Mammary epithelial cell (primary cell): ENCODE measurements at regions of chr4 and their contacts with region 1.

Region 1: DNA sequence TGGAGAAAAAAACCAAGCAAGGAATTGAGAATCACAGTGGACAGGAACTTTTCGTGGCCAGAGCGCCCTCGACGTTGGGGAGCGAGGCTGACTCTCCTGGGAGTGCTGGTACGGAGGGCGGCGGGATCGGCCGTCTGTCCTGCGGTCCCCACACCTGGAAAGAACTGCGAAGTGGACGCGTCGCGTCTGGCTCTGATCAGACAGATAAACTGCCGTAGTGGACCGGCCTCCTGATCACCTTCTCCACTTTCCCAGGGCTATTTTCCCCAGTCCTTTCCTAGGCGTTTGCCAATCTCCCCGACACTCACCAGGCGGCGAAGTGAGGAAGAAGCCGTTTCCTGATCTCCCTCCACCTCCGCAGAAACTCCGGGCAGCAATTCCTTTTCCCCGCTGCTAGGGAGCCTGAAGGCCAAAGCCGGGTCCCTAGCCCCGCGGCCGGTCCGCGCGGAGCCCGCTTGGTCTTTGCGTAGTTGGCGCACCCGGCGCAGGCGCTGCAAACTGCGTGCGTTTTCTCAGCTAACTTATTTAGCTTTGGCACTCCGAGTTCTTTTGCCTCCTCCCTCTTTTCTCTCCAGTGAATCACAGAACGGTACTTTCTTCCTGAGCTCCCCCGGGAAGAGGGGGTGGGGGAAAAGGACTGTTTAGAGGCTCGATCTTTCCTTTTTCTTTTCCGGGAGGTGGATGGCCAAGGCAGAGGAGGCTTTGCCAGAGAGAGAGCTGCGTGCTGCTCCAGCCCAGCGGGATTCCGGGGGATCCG is at the start of gene ARSJ:
- DNase-seq: peak; percentile 82
- H3K4me3 ChIP-seq: peak within 1 kb of the TSS; percentile 58 to 97 (median 90)
- H3K27ac ChIP-seq: peak within 1 kb of the TSS; percentile 94
- H3K4me1 ChIP-seq: peaks cover 14% of the 10 kb centered on the region
- H3K27me3 ChIP-seq: no peaks in the 10 kb centered on the region
- CTCF ChIP-seq: no peak
- total RNA-seq, gene ARSJ: 35.8 to 39.8 TPM

Region 2: DNA sequence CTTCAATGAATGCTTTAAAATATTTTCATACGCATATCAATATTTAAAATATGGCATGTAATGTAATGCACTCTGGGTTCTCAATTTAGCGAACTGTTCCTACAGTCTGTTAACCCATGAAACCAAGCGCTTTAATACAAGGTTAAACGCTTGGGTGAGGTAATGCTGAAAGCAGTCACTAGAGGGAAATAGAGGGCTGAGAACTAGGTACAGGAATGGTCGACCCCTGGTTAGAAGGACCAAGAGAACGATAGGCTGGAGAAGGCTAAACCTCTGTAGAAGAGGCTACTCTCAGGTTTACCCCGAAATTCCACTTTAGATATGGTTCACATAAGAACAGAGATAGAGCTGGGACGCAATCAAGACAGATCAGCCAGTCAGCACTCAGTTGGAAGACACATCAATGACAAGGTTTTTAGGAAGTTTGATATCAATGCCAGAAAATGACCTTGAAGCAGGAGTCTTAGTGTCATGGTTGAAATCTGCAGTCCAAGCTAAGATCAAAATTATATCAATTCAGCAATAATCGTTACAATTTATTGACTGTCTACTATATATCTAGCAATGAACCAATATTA is 26.8 kb before region 1 on chr4:
- CTCF ChIA-PET with region 1: no interaction called
- dilution Hi-C with region 1: no loop called
- in situ Hi-C with region 1: no loop called
- intact Hi-C with region 1: loop called (anchors 2 kb)
- DNase-seq: peak; percentile 27
- H3K4me3 ChIP-seq: no peak overlapping the region
- H3K27ac ChIP-seq: no peak overlapping the region
- H3K4me1 ChIP-seq: no peaks in the 10 kb centered on the region
- H3K27me3 ChIP-seq: no peaks in the 10 kb centered on the region
- CTCF ChIP-seq: peak; percentile 69 to 75

Region 3: GRCh38 chr4:114015444-114015899 is 36.1 kb after region 1 on chr4:
- CTCF ChIA-PET with region 1: no interaction called
- dilution Hi-C with region 1: no loop called
- in situ Hi-C with region 1: no loop called
- intact Hi-C with region 1: loop called (anchors 2 kb)
- DNase-seq: peak; percentile 99
- H3K4me3 ChIP-seq: no peak overlapping the region
- H3K27ac ChIP-seq: peak overlapping the region; percentile 78
- H3K4me1 ChIP-seq: peaks cover 42% of the 10 kb centered on the region
- H3K27me3 ChIP-seq: no peaks in the 10 kb centered on the region
- CTCF ChIP-seq: no peak

Region 4: GRCh38 chr4:114057746-114058145 is 78.4 kb after region 1 on chr4:
- CTCF ChIA-PET with region 1: no interaction called
- dilution Hi-C with region 1: no loop called
- in situ Hi-C with region 1: no loop called
- intact Hi-C with region 1: loop called (anchors 1 kb)
- DNase-seq: peak; percentile 62
- H3K4me3 ChIP-seq: peak overlapping the region in 1 of 3 experiments; percentile 5
- H3K27ac ChIP-seq: peak overlapping the region; percentile 59
- H3K4me1 ChIP-seq: peaks cover 11% of the 10 kb centered on the region
- H3K27me3 ChIP-seq: no peaks in the 10 kb centered on the region
- CTCF ChIP-seq: no peak

Region 5: GRCh38 chr4:114257501-114257900 is 278.2 kb after region 1 on chr4:
- CTCF ChIA-PET with region 1: no interaction called
- dilution Hi-C with region 1: no loop called
- in situ Hi-C with region 1: no loop called
- intact Hi-C with region 1: no loop called
- DNase-seq: no peak
- H3K4me3 ChIP-seq: no peak overlapping the region
- H3K27ac ChIP-seq: no peak overlapping the region
- H3K4me1 ChIP-seq: no peaks in the 10 kb centered on the region
- H3K27me3 ChIP-seq: no peaks in the 10 kb centered on the region
- CTCF ChIP-seq: no peak

Region 6: DNA sequence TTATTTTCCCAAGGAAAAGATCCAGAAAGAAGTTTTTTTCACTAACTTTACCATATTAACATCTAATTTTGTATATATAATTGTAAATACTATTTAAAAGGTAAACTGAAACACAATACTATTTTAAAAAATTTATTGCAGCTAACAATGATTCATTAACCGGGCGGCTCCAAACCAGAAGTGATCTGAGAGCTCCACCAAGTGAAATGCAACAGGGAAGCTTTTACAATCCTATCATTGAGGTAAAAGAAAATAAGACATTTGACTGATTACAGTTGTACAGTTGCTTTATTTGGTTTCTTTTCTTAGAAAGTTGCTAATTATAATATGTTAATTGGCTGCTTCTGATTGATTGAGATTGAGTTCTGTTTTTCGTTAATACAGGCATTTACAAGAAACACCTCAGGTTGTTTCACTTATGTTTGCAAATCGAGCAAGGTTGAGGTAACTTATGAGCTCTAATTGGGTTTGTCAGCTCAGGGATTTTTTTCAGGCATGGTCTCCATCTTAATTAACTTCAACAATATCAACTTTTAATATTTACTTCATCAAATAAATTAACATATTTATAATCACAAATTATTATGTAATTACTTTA is 399.1 kb after region 1 on chr4:
- CTCF ChIA-PET with region 1: no interaction called
- dilution Hi-C with region 1: no loop called
- in situ Hi-C with region 1: no loop called
- intact Hi-C with region 1: loop called (anchors 2 kb)
- DNase-seq: peak; percentile 32
- H3K4me3 ChIP-seq: no peak overlapping the region
- H3K27ac ChIP-seq: no peak overlapping the region
- H3K4me1 ChIP-seq: peaks cover 6% of the 10 kb centered on the region
- H3K27me3 ChIP-seq: no peaks in the 10 kb centered on the region
- CTCF ChIP-seq: peak; percentile 73 to 74